ENCODE measurements at regions of chr11 and their contacts with region 1.

Region 1: DNA sequence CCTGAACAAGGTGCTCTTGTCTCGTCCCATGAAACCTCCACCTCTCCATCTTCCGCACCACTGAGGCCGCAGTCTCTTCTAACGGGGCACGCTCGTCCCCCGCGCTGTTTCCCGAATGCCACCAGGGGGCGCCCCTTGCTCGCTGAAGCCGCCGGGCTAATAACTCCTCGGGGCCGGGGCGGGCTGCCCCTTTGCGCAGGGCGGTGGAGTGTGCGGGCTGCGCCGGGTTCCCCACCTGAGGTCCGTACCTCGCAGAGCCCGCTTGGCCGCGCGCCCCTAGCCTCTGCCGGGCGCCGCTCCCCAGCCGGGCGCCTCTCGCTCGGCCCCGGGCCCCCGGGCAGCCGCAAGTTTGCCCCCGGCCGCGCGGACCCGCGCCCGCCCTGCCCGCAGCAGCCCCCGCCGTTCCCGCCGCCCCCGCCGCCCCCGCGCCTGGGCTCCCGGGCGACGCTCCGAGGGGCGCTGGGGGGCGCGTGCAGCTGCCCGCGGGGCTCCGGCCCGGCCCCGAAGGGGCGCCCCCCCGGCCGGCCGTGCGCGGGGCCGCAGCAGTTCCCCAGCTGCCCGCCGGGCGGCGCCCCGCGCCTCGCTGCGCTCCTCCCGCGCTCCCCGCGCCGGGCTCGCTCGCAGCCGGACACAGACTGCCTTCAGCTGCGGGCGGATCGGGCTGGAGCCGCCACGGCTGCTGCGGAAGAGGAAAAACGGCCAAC is at the start of gene GRIK4:
- DNase-seq: peak; percentile 81
- H3K4me3 ChIP-seq: peak within 1 kb of the TSS in 3 of 4 donors; percentile 33 to 49 (median 43)
- H3K27ac ChIP-seq: no peak within 1 kb of the TSS
- H3K4me1 ChIP-seq: peaks cover 0 to 5% (median 0%) of the 10 kb centered on the region in 4 donors
- H3K27me3 ChIP-seq: peaks cover 90% of the 10 kb centered on the region
- CTCF ChIP-seq: peak; percentile 89 to 95 (median 91)
- EP300 ChIP-seq: no peak
- POLR2A ChIP-seq: no peak
- total RNA-seq, gene GRIK4: 2.6 TPM in 1 of 4 donors, not detected in the others

Region 2: GRCh38 chr11:120500414-120501071 is 10.7 kb before region 1 on chr11:
- in situ Hi-C with region 1: no loop called
- intact Hi-C with region 1: no loop called
- DNase-seq: no peak
- H3K4me3 ChIP-seq: no peak overlapping the region
- H3K27ac ChIP-seq: no peak overlapping the region
- H3K4me1 ChIP-seq: no peaks in the 10 kb centered on the region
- H3K27me3 ChIP-seq: peaks cover 61% of the 10 kb centered on the region
- CTCF ChIP-seq: no peak
- EP300 ChIP-seq: no peak
- POLR2A ChIP-seq: no peak

Region 3: GRCh38 chr11:120682866-120683265 is 171.6 kb after region 1 on chr11:
- in situ Hi-C with region 1: loop called in 3 of 4 experiments (anchors 5 to 25 kb)
- intact Hi-C with region 1: no loop called
- DNase-seq: no peak
- H3K4me3 ChIP-seq: no peak overlapping the region
- H3K27ac ChIP-seq: no peak overlapping the region
- H3K4me1 ChIP-seq: no peaks in the 10 kb centered on the region
- H3K27me3 ChIP-seq: peaks cover 16% of the 10 kb centered on the region
- CTCF ChIP-seq: no peak
- EP300 ChIP-seq: no peak
- POLR2A ChIP-seq: no peak

Region 4: DNA sequence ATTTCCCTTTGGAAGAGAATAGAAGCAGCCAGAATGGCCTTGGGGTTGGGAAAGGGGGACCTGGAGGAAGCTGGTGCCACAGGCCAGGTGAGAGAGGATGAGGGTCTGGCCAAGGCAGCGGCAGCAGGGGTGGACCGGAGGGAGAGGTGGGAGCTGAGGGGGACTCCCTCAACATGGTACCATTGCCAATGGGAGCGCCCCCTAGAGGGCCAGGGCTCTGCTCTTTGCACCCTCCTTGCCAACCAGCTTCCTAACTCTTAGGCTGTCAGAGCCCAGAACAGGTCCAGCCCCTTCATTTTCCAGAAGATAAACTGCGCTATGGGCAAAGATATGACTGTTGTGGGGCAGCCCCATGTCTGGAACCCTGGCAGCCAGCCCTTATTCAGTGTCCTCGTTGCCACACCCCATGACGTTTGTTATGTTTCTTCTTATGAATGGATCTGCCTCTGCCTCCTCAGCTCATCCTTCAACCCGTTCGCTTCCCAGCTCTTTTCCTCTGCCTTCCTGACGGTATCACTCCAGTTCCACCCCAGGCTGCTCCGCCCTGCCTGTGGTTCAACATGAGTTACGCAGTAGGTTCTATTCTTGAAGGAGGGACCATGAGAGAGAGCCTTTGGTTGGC is 185.4 kb after region 1 on chr11:
- in situ Hi-C with region 1: loop called in 1 of 4 experiments (anchors 25 kb)
- intact Hi-C with region 1: no loop called
- DNase-seq: no peak
- H3K4me3 ChIP-seq: no peak overlapping the region
- H3K27ac ChIP-seq: no peak overlapping the region
- H3K4me1 ChIP-seq: no peaks in the 10 kb centered on the region
- H3K27me3 ChIP-seq: peaks cover 10% of the 10 kb centered on the region
- CTCF ChIP-seq: no peak
- EP300 ChIP-seq: no peak
- POLR2A ChIP-seq: no peak

Region 5: GRCh38 chr11:120952461-120953434 is 441.5 kb after region 1 on chr11:
- in situ Hi-C with region 1: loop called in 3 of 4 experiments (anchors 25 kb)
- intact Hi-C with region 1: loop called (anchors 1 kb)
- DNase-seq: peak; percentile 79
- H3K4me3 ChIP-seq: peak overlapping the region in 2 of 4 donors; percentile 7 to 28
- H3K27ac ChIP-seq: no peak overlapping the region
- H3K4me1 ChIP-seq: peaks cover 0 to 5% (median 2%) of the 10 kb centered on the region in 4 donors
- H3K27me3 ChIP-seq: peaks cover 12% of the 10 kb centered on the region
- CTCF ChIP-seq: peak; percentile 63 to 80 (median 71)
- EP300 ChIP-seq: no peak
- POLR2A ChIP-seq: no peak

Region 6: DNA sequence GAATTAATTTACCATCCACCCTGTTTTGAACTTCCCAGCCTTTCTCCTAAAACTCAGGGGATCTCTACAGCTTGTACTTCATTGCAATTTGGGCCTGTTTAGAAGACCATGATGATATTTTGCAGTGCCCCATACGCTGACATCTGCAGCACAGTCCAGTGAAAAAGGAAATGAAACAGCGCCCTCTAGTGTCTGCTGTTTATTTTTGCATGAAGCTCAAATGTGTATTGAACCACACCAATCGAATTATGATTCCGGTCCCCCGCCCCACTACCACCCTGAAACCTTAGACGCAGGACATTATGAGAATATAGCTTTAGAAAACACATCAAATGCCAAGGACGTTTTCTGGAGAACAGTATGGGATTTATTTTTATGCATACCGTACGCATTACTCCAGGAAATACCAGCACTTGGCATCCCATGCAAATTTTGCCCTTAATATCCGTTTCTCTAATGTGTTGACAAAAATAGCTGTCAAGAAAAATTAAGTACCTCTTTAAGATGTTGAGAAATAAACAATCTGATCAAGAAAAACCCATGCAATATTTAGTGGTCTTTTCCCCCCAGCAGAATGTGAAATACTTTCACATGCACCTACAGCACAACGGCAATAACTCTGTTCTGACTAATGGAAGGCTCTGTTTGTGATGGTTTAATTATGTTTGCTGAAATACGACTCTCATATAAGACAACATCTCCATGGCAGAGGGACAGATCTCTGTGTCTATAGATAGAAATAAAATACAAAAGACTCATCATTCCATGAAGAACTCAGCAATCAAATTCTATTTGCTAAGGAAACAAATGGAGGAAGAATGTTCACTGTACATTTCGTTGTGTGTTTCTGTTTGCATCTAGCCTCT is 683.7 kb after region 1 on chr11:
- in situ Hi-C with region 1: loop called in 1 of 4 experiments (anchors 25 kb)
- intact Hi-C with region 1: loop called (anchors 10 kb)
- DNase-seq: peak; percentile 34
- H3K4me3 ChIP-seq: no peak overlapping the region
- H3K27ac ChIP-seq: no peak overlapping the region
- H3K4me1 ChIP-seq: no peaks in the 10 kb centered on the region
- H3K27me3 ChIP-seq: peaks cover 14% of the 10 kb centered on the region
- CTCF ChIP-seq: peak; percentile 68 to 87 (median 80)
- EP300 ChIP-seq: no peak
- POLR2A ChIP-seq: no peak

Measured in transverse colon (tissue), 4 donors.